GM12878 (cell line): ENCODE measurements at regions of chr2 and their contacts with region 1.

Region 1: DNA sequence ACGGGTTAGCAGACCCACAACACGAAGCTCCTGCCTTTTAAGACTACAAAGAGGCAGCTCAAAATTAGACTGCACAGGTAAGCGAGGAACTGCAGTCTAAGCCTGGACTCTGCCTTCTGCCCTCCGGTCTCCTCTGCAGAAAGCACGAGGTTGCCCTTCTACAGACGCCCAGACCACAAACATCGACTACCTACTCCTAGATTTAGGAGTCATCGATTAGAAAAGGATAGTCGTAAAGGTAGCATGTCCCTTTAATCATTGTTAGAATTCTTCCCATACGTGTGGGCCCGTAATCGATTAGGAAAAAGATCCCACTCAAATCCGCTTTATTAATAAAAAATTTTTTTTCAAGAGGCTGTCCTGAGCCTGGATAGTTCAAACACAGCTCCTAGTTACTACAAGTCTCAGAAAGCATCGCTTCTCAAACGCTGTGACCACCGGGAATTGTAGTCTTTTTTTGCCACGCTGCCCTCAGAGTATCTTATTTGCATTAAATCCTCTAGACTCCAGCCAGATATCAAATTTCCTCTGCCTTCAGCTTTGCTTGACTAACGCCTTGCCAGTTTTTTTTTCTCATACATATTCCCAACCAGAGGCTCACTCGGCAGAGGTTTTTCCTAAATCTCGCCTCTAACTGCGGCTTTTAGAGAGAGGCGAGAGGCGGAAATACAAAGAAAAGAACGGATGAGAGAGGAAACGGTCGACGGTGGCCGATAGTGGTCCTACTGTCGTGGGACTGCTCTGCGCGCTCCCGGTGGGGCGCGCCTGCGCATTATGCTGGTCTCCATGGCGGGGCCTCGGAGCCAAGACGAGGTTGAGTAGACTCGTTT is at the starts of genes CARF and WDR12:
- DNase-seq: peak; percentile 82
- ATAC-seq: peak; percentile 88
- H3K4me3 ChIP-seq: peak within 1 kb of the TSS; percentile 95
- H3K27ac ChIP-seq: peak within 1 kb of the TSS; percentile 93
- H3K4me1 ChIP-seq: peaks cover 5% of the 10 kb centered on the region
- H3K27me3 ChIP-seq: no peaks in the 10 kb centered on the region
- CTCF ChIP-seq: no peak
- EP300 ChIP-seq: no peak
- POLR2A ChIP-seq: peak; percentile 80
- RAD21 ChIP-seq: no peak
- polyA plus RNA-seq, gene CARF: 1.8 to 2.8 TPM
- polyA plus RNA-seq, gene WDR12: 214 to 256 TPM

Region 2: GRCh38 chr2:202858575-202858974 is 53.2 kb before region 1 on chr2:
- CTCF ChIA-PET with region 1: no interaction called
- POLR2A ChIA-PET with region 1: no interaction called
- RAD21 ChIA-PET with region 1: no interaction called
- SMC1A ChIA-PET with region 1: no interaction called
- in situ Hi-C with region 1: no loop called
- intact Hi-C with region 1: no loop called
- DNase-seq: no peak
- ATAC-seq: no peak
- H3K4me3 ChIP-seq: no peak overlapping the region
- H3K27ac ChIP-seq: no peak overlapping the region
- H3K4me1 ChIP-seq: no peaks in the 10 kb centered on the region
- H3K27me3 ChIP-seq: no peaks in the 10 kb centered on the region
- CTCF ChIP-seq: no peak
- EP300 ChIP-seq: no peak
- POLR2A ChIP-seq: no peak
- RAD21 ChIP-seq: no peak

Region 3: GRCh38 chr2:203014456-203015199 is 102.9 kb after region 1 on chr2 and contains the start of gene NBEAL1:
- CTCF ChIA-PET with region 1: interaction called, 5 read pairs
- POLR2A ChIA-PET with region 1: interaction called, 3 read pairs
- RAD21 ChIA-PET with region 1: interaction called, 12 read pairs
- SMC1A ChIA-PET with region 1: interaction called, 7 read pairs
- in situ Hi-C with region 1: no loop called
- intact Hi-C with region 1: loop called (anchors 2 kb)
- DNase-seq: peak; percentile 94
- ATAC-seq: peak; percentile 92
- H3K4me3 ChIP-seq: peak within 1 kb of the TSS; percentile 96
- H3K27ac ChIP-seq: peak within 1 kb of the TSS; percentile 91
- H3K4me1 ChIP-seq: peaks cover 3% of the 10 kb centered on the region; the same call in 1 of the 2 replicates
- H3K27me3 ChIP-seq: no peaks in the 10 kb centered on the region
- CTCF ChIP-seq: no peak
- EP300 ChIP-seq: no peak
- POLR2A ChIP-seq: peak; percentile 82
- RAD21 ChIP-seq: no peak
- polyA plus RNA-seq, gene NBEAL1: 1.9 to 3.6 TPM

Region 4: DNA sequence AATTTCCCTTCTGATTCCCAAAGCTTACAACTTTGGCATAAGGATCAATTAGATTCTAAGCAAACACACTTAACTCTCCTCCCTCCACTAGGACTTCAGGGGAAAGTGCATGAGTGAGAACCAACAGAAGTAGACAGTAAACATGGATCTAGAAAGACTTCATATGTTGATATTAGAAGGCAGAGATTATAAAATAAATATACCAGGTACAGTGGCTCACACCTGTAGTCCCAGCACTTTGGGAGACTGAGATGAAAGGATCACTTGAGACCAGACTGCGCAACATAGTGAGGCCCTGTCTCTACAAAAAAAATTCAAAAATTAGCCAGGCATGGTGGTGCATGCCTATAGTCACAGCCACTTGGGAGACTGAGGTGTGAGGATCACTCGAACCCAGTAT is 118.8 kb after region 1 on chr2:
- CTCF ChIA-PET with region 1: no interaction called
- POLR2A ChIA-PET with region 1: no interaction called
- RAD21 ChIA-PET with region 1: no interaction called
- SMC1A ChIA-PET with region 1: no interaction called
- in situ Hi-C with region 1: no loop called
- intact Hi-C with region 1: no loop called
- DNase-seq: no peak
- ATAC-seq: no peak
- H3K4me3 ChIP-seq: no peak overlapping the region
- H3K27ac ChIP-seq: no peak overlapping the region
- H3K4me1 ChIP-seq: no peaks in the 10 kb centered on the region
- H3K27me3 ChIP-seq: no peaks in the 10 kb centered on the region
- CTCF ChIP-seq: no peak
- EP300 ChIP-seq: no peak
- POLR2A ChIP-seq: no peak
- RAD21 ChIP-seq: no peak

Region 5: GRCh38 chr2:203061346-203061745 is 149.6 kb after region 1 on chr2:
- CTCF ChIA-PET with region 1: no interaction called
- POLR2A ChIA-PET with region 1: no interaction called
- RAD21 ChIA-PET with region 1: no interaction called
- SMC1A ChIA-PET with region 1: no interaction called
- in situ Hi-C with region 1: no loop called
- intact Hi-C with region 1: no loop called
- DNase-seq: no peak
- ATAC-seq: no peak
- H3K4me3 ChIP-seq: no peak overlapping the region
- H3K27ac ChIP-seq: no peak overlapping the region
- H3K4me1 ChIP-seq: no peaks in the 10 kb centered on the region
- H3K27me3 ChIP-seq: no peaks in the 10 kb centered on the region
- CTCF ChIP-seq: no peak
- EP300 ChIP-seq: no peak
- POLR2A ChIP-seq: no peak
- RAD21 ChIP-seq: no peak